CD4-positive, alpha-beta memory T cell (primary cell): ENCODE measurements at regions of chr20 and their contacts with region 1.

Region 1: GRCh38 chr20:63707549-63708300 is at the starts of genes ARFRP1 and ZGPAT:
- DNase-seq: peak; percentile 85 to 91 (median 86)
- H3K4me3 ChIP-seq: peak within 1 kb of the TSS; percentile 57 to 87
- H3K4me3 Mint-ChIP-seq: peak within 1 kb of the TSS; percentile 86 to 95 (median 90)
- H3K27ac ChIP-seq: peak within 1 kb of the TSS; percentile 65
- H3K27ac Mint-ChIP-seq: peak within 1 kb of the TSS; percentile 86 to 95 (median 90)
- H3K4me1 ChIP-seq: peaks cover 52% of the 10 kb centered on the region
- H3K4me1 Mint-ChIP-seq: peaks cover 24 to 61% (median 38%) of the 10 kb centered on the region in 4 donors
- H3K27me3 ChIP-seq: no peaks in the 10 kb centered on the region
- H3K27me3 Mint-ChIP-seq: no peaks in the 10 kb centered on the region
- total RNA-seq, gene ARFRP1: 85.6 to 92.0 TPM
- total RNA-seq, gene ZGPAT: 51.8 to 55.3 TPM

Region 2: DNA sequence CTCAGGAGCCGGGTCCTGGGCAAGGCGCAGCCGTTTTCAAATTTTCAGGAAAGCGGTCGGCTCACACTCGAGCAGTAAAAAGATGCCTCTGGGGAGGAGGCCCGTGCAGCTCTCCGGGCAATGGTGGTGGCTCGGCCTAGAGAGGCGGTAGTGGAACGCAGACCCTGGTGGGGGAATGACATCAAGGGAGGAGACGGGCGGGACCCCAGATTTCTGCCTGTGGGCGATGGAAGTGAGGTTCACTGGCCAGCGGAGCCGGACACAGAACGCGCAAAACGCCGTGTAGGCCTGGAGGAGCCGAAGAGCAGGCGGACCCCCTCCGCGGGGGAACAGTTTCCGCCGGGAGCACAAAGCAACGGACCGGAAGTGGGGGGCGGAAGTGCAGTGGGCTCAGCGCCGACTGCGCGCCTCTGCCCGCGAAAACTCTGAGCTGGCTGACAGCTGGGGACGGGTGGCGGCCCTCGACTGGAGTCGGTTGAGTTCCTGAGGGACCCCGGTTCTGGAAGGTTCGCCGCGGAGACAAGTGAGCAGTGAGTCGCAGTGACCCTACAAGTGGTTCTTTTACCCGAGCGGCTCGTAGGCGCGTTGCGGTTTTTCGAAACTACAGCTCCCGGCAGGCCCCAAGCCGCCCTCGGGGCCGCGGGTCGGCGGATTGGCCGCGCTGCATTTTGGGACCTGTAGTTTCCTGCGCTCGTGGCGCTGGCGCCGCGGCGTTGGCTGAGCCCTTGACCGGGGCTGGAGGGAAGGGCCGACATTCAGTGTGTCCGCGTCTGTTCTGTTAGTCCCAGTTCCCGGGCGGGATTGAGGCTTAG is 49.6 kb before region 1 on chr20 and contains the start of gene RTEL1:
- CTCF ChIA-PET with region 1: interaction called, 3 read pairs
- POLR2A ChIA-PET with region 1: interaction called, 20 read pairs
- intact Hi-C with region 1: loop called (anchors 1 kb)
- DNase-seq: peak; percentile 86 to 93 (median 88)
- H3K4me3 ChIP-seq: peak within 1 kb of the TSS; percentile 91 to 97
- H3K4me3 Mint-ChIP-seq: peak within 1 kb of the TSS; percentile 92 to 98 (median 96)
- H3K27ac ChIP-seq: peak within 1 kb of the TSS; percentile 75
- H3K27ac Mint-ChIP-seq: peak within 1 kb of the TSS; percentile 94 to 98 (median 96)
- H3K4me1 ChIP-seq: peaks cover 42% of the 10 kb centered on the region
- H3K4me1 Mint-ChIP-seq: peaks cover 17 to 48% (median 24%) of the 10 kb centered on the region in 4 donors
- H3K27me3 ChIP-seq: no peaks in the 10 kb centered on the region
- H3K27me3 Mint-ChIP-seq: no peaks in the 10 kb centered on the region
- total RNA-seq, gene RTEL1: 30.9 to 36.0 TPM

Region 3: DNA sequence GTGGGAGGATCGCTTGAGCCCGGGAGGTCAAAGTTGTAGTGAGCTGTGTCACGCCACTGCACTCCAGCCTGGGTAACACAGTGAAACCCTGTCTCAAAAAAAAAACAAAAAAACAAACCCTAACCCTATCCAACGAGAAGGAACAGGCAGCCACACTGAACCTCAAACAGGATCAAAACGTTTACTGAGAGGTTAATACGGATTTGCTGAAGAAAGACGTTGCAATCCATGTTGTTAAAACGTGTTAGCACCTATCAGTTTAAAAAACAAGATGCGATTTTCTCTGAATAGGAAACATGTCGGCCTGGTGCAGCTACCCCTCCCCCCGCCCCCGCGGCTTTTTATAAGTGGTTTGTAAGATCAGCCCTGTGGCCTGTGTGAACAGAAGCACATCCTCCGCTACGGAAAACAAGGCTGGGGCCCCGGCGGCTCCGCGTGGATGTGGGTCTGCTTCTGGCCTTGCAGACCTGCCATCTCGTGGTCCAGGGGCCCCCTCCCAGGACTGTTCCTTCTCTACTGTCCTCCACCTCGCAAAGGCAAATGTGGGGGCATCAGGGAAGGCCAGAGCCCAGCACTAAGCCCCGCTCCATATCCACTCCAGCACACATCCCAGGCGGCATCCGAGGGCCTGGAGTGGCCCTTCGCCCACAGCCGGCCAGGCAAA is 43.2 kb after region 1 on chr20:
- CTCF ChIA-PET with region 1: interaction called, 3 read pairs
- POLR2A ChIA-PET with region 1: interaction called, 23 read pairs
- intact Hi-C with region 1: loop called (anchors 1 kb)
- DNase-seq: peak; percentile 60 to 70 (median 68)
- H3K4me3 ChIP-seq: peak overlapping the region in 1 of 2 donors; percentile 60
- H3K4me3 Mint-ChIP-seq: peak overlapping the region; percentile 60 to 82 (median 78)
- H3K27ac ChIP-seq: peak overlapping the region; percentile 55
- H3K27ac Mint-ChIP-seq: peak overlapping the region; percentile 86 to 92 (median 91)
- H3K4me1 ChIP-seq: peaks cover 25% of the 10 kb centered on the region
- H3K4me1 Mint-ChIP-seq: peaks cover 9 to 35% (median 19%) of the 10 kb centered on the region in 4 donors
- H3K27me3 ChIP-seq: no peaks in the 10 kb centered on the region
- H3K27me3 Mint-ChIP-seq: no peaks in the 10 kb centered on the region

Region 4: DNA sequence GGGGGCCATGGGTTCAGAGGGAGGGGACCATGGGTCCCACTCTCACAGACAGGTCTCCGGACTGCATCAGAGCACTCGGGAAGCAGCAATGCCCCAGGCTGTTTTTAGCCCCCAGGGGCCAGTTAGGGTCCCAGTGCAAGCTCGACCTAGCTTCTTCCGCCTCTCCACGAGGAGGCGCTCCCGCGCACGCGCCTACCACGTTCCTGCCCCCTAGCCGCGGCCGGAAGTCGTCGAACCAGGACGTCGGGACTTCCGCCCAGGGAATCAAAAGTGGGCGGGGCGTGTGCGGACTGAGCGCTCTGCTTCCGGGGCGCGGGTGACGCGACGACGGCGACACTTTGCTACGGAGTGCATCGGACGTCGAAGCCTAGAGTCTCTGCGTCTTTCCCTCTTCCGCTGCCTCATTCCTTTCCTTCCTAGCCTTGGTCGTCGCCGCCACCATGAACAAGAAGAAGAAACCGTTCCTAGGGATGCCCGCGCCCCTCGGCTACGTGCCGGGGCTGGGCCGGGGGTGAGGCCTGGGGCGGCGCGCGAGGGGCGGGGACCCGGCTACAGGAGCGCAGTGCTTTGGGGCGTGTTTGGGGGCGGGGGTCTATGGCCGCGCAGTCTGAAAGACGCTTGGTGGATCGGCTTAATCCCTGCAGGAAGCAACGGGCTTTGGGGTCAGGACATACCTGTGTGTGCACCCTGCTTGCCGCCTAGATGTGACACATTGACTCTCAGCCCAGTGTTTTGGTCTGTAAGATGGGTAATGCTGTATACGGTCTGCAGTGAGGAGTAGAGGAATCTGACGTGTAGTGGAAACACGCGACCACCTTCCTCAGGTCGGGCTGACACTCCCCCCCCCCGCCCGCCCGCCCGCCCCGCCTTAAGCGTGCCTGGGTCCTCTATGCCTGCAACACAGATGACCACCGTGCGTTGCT is 273.3 kb after region 1 on chr20 and contains the start of gene PRPF6:
- CTCF ChIA-PET with region 1: interaction called, 7 read pairs
- POLR2A ChIA-PET with region 1: interaction called, 4 read pairs
- intact Hi-C with region 1: loop called (anchors 5 kb)
- DNase-seq: peak; percentile 91 to 94 (median 94)
- H3K4me3 ChIP-seq: peak within 1 kb of the TSS; percentile 42 to 67
- H3K4me3 Mint-ChIP-seq: peak within 1 kb of the TSS; percentile 90 to 99 (median 93)
- H3K27ac ChIP-seq: peak within 1 kb of the TSS; percentile 69
- H3K27ac Mint-ChIP-seq: peak within 1 kb of the TSS; percentile 95 to 99 (median 98)
- H3K4me1 ChIP-seq: peaks cover 54% of the 10 kb centered on the region
- H3K4me1 Mint-ChIP-seq: peaks cover 48 to 72% (median 60%) of the 10 kb centered on the region in 4 donors
- H3K27me3 ChIP-seq: no peaks in the 10 kb centered on the region
- H3K27me3 Mint-ChIP-seq: no peaks in the 10 kb centered on the region
- total RNA-seq, gene PRPF6: 86.4 to 88.7 TPM